CD4-positive, alpha-beta memory T cell (primary cell): ENCODE measurements at regions of chr1 and their contacts with region 1.

Region 1: DNA sequence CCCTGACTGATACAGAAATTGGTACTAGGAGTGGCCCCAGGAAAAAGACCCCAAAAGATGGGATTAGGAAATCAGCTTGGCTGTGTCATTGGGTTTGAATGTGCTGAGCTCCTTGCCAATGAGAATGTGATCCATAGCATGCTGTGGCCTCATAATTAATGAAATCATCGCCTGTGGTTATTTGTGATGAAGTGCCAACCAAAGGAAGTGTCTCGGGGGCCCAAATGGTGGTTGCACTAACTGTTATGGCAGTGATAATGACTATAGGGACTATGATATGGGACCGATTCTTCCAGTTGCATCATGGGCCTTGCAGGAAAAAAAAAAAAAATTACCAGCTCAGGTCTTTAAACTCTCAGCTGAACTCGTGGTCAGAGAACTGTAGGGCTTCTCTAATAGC is 15.4 kb upstream of the ZDHHC18 start:
- DNase-seq: no peak
- H3K4me3 ChIP-seq: no peak overlapping the region
- H3K4me3 Mint-ChIP-seq: peak overlapping the region in 1 of 8 donors; percentile 39
- H3K27ac ChIP-seq: no peak overlapping the region
- H3K27ac Mint-ChIP-seq: peak overlapping the region; percentile 37 to 96 (median 80)
- H3K4me1 ChIP-seq: no peaks in the 10 kb centered on the region
- H3K4me1 Mint-ChIP-seq: peaks cover 3 to 12% (median 8%) of the 10 kb centered on the region in 4 donors
- H3K27me3 ChIP-seq: no peaks in the 10 kb centered on the region
- H3K27me3 Mint-ChIP-seq: no peaks in the 10 kb centered on the region

Region 2: DNA sequence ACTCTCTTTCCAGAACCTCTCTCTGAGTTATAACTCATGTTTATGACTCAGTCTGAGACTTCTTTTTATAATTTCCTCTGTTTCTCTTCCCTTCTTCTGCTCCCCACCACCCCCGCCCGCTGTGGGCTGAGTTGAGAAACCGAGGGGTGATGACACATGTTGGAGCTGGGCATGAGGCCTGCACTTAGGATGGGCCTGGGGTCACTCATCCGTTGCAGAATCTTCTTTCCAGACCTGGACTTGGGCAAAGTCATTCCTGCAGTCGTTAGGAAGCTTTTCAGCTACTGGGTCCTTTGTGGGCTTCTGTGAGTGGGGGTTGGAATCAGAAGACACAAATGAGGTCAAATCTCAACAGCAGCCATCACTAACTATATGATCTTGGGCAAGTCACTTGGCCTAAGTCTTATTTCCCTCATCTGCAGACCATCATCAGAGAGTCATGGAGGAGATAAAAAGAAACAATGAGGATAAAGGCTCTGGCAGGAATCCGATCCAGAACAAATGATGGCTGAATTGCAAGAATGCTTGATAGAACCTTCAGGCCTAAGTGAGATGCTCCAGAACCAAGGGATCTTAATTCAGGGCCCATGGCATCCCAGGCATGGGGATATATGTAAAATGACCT is 228.1 kb before region 1 on chr1:
- CTCF ChIA-PET with region 1: no interaction called
- POLR2A ChIA-PET with region 1: no interaction called
- intact Hi-C with region 1: no loop called
- DNase-seq: no peak
- H3K4me3 ChIP-seq: no peak overlapping the region
- H3K4me3 Mint-ChIP-seq: no peak overlapping the region
- H3K27ac ChIP-seq: no peak overlapping the region
- H3K27ac Mint-ChIP-seq: peak overlapping the region in 3 of 7 donors; percentile 16 to 82 (median 44)
- H3K4me1 ChIP-seq: no peaks in the 10 kb centered on the region
- H3K4me1 Mint-ChIP-seq: peaks cover 5 to 12% (median 6%) of the 10 kb centered on the region in 4 donors
- H3K27me3 ChIP-seq: no peaks in the 10 kb centered on the region
- H3K27me3 Mint-ChIP-seq: no peaks in the 10 kb centered on the region

Region 3: GRCh38 chr1:26794391-26794790 is 16.7 kb before region 1 on chr1:
- CTCF ChIA-PET with region 1: interaction called, 53 read pairs
- POLR2A ChIA-PET with region 1: interaction called, 12 read pairs
- intact Hi-C with region 1: no loop called
- DNase-seq: no peak
- H3K4me3 ChIP-seq: no peak overlapping the region
- H3K4me3 Mint-ChIP-seq: no peak overlapping the region
- H3K27ac ChIP-seq: no peak overlapping the region
- H3K27ac Mint-ChIP-seq: peak overlapping the region in 4 of 7 donors; percentile 37 to 91 (median 55)
- H3K4me1 ChIP-seq: peaks cover 29% of the 10 kb centered on the region
- H3K4me1 Mint-ChIP-seq: peaks cover 23 to 37% (median 33%) of the 10 kb centered on the region in 4 donors
- H3K27me3 ChIP-seq: no peaks in the 10 kb centered on the region
- H3K27me3 Mint-ChIP-seq: no peaks in the 10 kb centered on the region

Region 4: DNA sequence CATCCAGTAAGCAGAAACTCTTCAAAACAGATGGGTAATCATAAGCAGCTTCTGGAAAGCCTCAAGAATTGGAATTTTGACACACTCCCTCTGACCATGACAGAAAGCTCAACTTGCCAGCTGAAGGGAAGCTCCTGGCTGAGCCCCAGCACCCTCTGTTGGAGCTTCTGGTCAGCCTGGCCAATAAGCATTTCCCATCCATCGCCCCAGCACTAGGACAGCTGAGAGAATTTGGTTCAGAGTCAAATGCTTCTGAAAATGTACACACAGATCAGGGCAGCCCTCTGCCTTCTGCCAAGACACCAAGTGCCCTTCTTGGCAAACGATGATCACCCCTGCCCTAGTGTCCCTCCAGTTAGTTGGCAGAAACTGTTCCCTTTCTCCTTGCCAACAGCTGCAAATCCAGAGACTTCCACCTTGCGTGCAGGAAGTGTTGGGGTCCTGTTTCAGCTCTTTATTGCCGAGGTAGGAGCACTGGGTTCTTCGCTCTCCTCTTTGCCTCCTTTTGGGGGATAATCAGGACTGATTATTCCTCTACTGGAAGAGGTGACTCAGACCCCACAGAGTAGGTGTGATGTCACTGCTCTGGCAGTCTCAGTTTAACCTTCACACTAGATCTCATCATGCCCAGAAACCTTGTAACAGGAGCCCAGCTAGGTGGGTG is 11.4 kb before region 1 on chr1:
- CTCF ChIA-PET with region 1: interaction called, 53 read pairs
- POLR2A ChIA-PET with region 1: interaction called, 8 read pairs
- intact Hi-C with region 1: no loop called
- DNase-seq: no peak
- H3K4me3 ChIP-seq: no peak overlapping the region
- H3K4me3 Mint-ChIP-seq: peak overlapping the region in 7 of 8 donors; percentile 49 to 83 (median 79)
- H3K27ac ChIP-seq: peak overlapping the region; percentile 30
- H3K27ac Mint-ChIP-seq: peak overlapping the region; percentile 91 to 97 (median 92)
- H3K4me1 ChIP-seq: peaks cover 35% of the 10 kb centered on the region
- H3K4me1 Mint-ChIP-seq: peaks cover 26 to 38% (median 32%) of the 10 kb centered on the region in 4 donors
- H3K27me3 ChIP-seq: no peaks in the 10 kb centered on the region
- H3K27me3 Mint-ChIP-seq: no peaks in the 10 kb centered on the region

Region 5: GRCh38 chr1:26826261-26827105 is 15.4 kb after region 1 on chr1 and contains the start of gene ZDHHC18:
- CTCF ChIA-PET with region 1: interaction called, 82 read pairs
- POLR2A ChIA-PET with region 1: interaction called, 3 read pairs
- intact Hi-C with region 1: no loop called
- DNase-seq: peak; percentile 66 to 82 (median 78)
- H3K4me3 ChIP-seq: peak within 1 kb of the TSS; percentile 50 to 69
- H3K4me3 Mint-ChIP-seq: peak within 1 kb of the TSS; percentile 93 to 98 (median 94)
- H3K27ac ChIP-seq: peak within 1 kb of the TSS; percentile 94
- H3K27ac Mint-ChIP-seq: peak within 1 kb of the TSS; percentile 96 to 100 (median 100)
- H3K4me1 ChIP-seq: peaks cover 57% of the 10 kb centered on the region
- H3K4me1 Mint-ChIP-seq: peaks cover 47 to 72% (median 57%) of the 10 kb centered on the region in 4 donors
- H3K27me3 ChIP-seq: no peaks in the 10 kb centered on the region
- H3K27me3 Mint-ChIP-seq: no peaks in the 10 kb centered on the region
- total RNA-seq, gene ZDHHC18: 54.9 to 56.4 TPM

Region 6: DNA sequence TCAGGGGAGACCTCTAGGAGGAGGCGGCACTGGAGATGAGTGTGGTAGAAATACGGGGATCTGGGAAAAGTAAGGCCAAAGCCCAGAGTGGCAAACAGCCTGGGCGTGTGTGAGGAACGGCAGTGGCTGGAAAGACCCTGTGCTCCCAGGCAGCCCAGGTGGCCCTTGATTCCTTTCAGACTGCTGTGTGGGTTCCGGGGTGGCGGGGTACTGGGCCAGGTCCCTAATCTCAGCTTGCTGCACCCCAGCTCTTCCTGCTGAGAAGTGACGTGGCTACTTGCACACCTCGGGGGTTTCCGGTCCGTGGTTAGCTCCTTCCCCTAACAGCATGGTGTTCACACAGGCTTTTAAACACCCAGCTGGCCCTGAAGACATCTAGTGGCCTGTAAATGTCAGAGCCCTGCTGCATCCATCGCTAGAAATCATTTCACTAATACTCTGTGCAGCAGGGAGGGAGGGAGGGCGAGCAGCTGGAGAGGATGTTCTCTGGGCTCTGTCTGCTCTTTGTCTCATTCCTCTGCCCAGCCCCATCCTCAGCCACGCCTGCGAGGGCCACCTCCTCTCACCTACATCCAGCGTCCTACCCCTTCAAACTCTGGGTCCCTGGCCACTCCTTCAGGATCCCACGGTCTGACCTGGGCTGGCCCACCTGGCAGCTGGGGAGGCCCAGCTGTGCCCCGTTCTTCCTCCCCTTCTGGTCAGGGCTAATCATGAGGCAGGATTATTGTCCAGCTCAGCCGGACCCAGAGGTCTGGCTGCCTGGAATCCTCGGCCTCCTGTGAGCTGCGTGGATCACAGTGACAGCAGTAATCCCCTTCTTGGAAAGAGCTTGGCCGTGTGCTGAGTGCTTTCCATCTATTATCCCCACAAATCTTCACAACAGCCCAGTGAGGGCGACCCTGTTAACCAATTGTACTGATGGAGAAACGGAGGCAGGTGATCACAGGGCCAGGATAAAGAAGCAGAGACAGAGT is 22.7 kb after region 1 on chr1:
- CTCF ChIA-PET with region 1: interaction called, 82 read pairs
- POLR2A ChIA-PET with region 1: interaction called, 22 read pairs
- intact Hi-C with region 1: loop called (anchors 1 kb)
- DNase-seq: peak; percentile 89 to 98 (median 94)
- H3K4me3 ChIP-seq: peak overlapping the region in 1 of 2 donors; percentile 23
- H3K4me3 Mint-ChIP-seq: peak overlapping the region; percentile 74 to 92 (median 85)
- H3K27ac ChIP-seq: peak overlapping the region; percentile 97
- H3K27ac Mint-ChIP-seq: peak overlapping the region; percentile 98 to 100 (median 100)
- H3K4me1 ChIP-seq: peaks cover 74% of the 10 kb centered on the region
- H3K4me1 Mint-ChIP-seq: peaks cover 60 to 87% (median 73%) of the 10 kb centered on the region in 4 donors
- H3K27me3 ChIP-seq: no peaks in the 10 kb centered on the region
- H3K27me3 Mint-ChIP-seq: no peaks in the 10 kb centered on the region

Region 7: DNA sequence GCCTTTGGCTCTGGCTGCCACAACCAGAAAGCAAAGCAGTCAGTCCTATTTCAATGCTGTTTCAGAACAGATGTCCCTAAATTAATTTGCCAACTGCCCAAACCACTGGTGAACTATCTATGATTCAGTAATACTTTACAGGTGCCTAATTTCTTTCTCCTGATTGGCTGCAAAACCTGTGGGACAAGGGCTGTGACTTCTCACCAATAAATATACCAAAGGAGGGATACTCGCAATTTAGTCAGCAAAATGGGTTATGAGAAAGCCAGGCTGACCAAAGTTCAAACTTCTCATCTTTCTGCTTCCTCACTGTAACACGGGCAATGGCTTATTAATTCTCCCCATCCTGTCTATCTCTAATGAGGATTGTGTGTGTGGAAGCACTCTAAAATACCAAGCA is 66.3 kb after region 1 on chr1:
- CTCF ChIA-PET with region 1: interaction called, 45 read pairs
- POLR2A ChIA-PET with region 1: interaction called, 4 read pairs
- intact Hi-C with region 1: loop called (anchors 1 kb)
- DNase-seq: no peak
- H3K4me3 ChIP-seq: no peak overlapping the region
- H3K4me3 Mint-ChIP-seq: no peak overlapping the region
- H3K27ac ChIP-seq: no peak overlapping the region
- H3K27ac Mint-ChIP-seq: no peak overlapping the region
- H3K4me1 ChIP-seq: no peaks in the 10 kb centered on the region
- H3K4me1 Mint-ChIP-seq: peaks cover 0 to 1% (median under 1%) of the 10 kb centered on the region in 4 donors
- H3K27me3 ChIP-seq: no peaks in the 10 kb centered on the region
- H3K27me3 Mint-ChIP-seq: no peaks in the 10 kb centered on the region

Region 8: DNA sequence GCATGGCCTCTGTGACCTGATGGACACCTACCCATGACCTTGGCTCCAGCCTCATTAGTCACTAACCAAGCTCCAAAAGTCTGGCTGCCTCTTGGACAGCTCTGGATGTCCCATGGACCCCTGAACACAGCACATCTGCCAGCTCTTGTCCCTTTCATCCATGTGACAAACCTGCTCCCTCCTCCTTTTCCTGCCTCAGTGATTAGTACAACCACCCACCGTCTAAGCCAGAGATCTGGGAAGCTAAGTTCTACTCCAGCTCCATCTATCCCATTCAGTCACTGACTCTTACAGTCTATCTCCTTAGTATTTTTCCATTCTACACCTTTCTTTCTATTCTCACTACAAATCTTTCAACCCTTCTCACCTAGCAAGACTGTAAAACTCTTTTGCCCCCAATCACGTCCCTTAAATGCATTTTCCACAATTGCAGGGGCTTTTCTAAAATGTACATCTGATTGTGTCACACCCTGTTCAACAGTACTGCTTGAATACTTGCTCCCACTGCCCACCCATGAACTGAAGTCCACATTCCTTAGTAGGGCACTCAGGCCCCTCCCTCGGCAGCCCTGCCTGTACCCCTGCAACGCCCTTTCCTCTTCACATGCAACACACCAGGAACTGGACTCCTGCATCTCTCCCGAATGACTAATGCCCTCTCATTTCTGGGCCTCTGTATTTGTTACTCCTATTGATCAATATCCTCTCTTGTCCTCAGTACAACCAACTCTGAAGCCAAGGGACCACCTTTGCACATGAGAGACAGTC is 71.8 kb after region 1 on chr1:
- CTCF ChIA-PET with region 1: interaction called, 45 read pairs
- POLR2A ChIA-PET with region 1: interaction called, 4 read pairs
- intact Hi-C with region 1: loop called (anchors 1 kb)
- DNase-seq: no peak
- H3K4me3 ChIP-seq: no peak overlapping the region
- H3K4me3 Mint-ChIP-seq: no peak overlapping the region
- H3K27ac ChIP-seq: no peak overlapping the region
- H3K27ac Mint-ChIP-seq: peak overlapping the region in 4 of 7 donors; percentile 7 to 82 (median 22)
- H3K4me1 ChIP-seq: peaks cover 6% of the 10 kb centered on the region
- H3K4me1 Mint-ChIP-seq: peaks cover 6 to 14% (median 10%) of the 10 kb centered on the region in 4 donors
- H3K27me3 ChIP-seq: no peaks in the 10 kb centered on the region
- H3K27me3 Mint-ChIP-seq: no peaks in the 10 kb centered on the region